HepG2 (cell line): ENCODE measurements at regions of chr5 and their contacts with region 1.

Region 1: DNA sequence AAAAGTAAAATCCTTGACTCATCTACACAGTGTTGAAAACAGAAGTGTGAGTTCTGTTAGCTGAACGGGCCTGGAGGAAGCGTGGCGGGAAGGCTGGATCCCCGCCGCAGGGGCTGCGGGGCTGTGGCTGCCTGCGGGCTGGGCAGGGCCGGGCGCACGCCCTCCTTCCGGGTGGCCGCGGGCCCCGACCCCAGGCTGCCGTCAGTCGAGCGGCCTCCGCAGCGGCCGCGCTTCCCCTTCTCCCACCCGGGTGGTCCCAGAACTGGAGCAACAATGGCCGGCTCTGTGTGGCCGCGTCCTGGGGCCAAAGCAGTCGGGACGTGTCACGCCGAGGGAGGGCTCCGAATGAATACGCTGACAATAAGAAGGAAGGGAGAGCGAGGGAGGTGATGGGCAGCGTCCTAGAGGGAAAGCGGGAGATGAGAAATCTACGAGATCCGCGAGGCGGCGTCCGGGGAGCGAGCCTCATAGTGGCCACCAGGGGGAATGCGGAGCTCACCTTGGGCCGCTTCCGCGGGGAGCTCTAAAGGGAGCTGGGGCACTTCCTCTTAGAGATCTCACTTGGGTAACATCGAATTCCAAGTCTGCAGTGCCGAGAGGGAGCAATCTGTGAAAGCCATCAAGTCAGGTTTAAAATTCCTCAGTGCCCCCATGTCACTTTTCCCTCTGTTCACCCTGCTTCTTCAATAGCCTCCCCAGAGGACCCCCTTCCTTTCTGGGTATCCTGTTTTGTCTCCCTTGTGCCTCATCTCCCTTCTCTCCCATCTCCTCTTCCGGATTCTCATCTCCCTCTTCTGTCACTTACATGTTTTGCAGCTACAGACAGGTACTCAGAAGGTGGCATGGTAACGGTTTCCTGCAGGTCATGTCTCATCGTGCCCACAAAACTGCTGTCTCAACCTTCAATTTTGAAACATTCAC is 83.9 kb downstream of the SLC1A3 start:
- DNase-seq: peak; percentile 53
- ATAC-seq: peak; percentile 96
- H3K4me3 ChIP-seq: peak overlapping the region; percentile 49 to 71 (median 51)
- H3K27ac ChIP-seq: no peak overlapping the region
- H3K4me1 ChIP-seq: peaks cover 4% of the 10 kb centered on the region; the same call in 1 of the 2 replicates
- H3K27me3 ChIP-seq: peaks cover 0 to 6% of the 10 kb centered on the region in 2 experiments; a peak in 1 of 5 replicates
- CTCF ChIP-seq: peak; percentile 84
- EP300 ChIP-seq: no peak
- POLR2A ChIP-seq: no peak
- RAD21 ChIP-seq: no peak; the same call in 1 of the 2 replicates

Region 2: GRCh38 chr5:36073595-36074216 is 616.6 kb before region 1 on chr5:
- CTCF ChIA-PET with region 1: no interaction called
- POLR2A ChIA-PET with region 1: no interaction called
- in situ Hi-C with region 1: loop called (anchors 25 kb)
- intact Hi-C with region 1: loop called (anchors 10 kb)
- DNase-seq: peak; percentile 38
- ATAC-seq: peak; percentile 97
- H3K4me3 ChIP-seq: no peak overlapping the region
- H3K27ac ChIP-seq: no peak overlapping the region
- H3K4me1 ChIP-seq: 0 out of 2 replicates have a peak, but pooled peaks cover 6% of the 10 kb centered on the region
- H3K27me3 ChIP-seq: no peaks in the 10 kb centered on the region
- CTCF ChIP-seq: peak; percentile 68
- EP300 ChIP-seq: no peak
- POLR2A ChIP-seq: no peak
- RAD21 ChIP-seq: no peak

Region 3: GRCh38 chr5:36177715-36178523 is 512.4 kb before region 1 on chr5:
- CTCF ChIA-PET with region 1: interaction called, 4 read pairs
- POLR2A ChIA-PET with region 1: no interaction called
- in situ Hi-C with region 1: no loop called
- intact Hi-C with region 1: loop called (anchors 2 kb)
- DNase-seq: peak; percentile 48
- ATAC-seq: peak; percentile 45; the same call in 2 of the 3 replicates
- H3K4me3 ChIP-seq: no peak overlapping the region
- H3K27ac ChIP-seq: peak overlapping the region; percentile 23
- H3K4me1 ChIP-seq: peaks cover 60% of the 10 kb centered on the region
- H3K27me3 ChIP-seq: no peaks in the 10 kb centered on the region
- CTCF ChIP-seq: peak; percentile 71
- EP300 ChIP-seq: no peak
- POLR2A ChIP-seq: no peak
- RAD21 ChIP-seq: 0 out of 2 replicates have a peak, but pooled peaks have one; percentile 35

Region 4: DNA sequence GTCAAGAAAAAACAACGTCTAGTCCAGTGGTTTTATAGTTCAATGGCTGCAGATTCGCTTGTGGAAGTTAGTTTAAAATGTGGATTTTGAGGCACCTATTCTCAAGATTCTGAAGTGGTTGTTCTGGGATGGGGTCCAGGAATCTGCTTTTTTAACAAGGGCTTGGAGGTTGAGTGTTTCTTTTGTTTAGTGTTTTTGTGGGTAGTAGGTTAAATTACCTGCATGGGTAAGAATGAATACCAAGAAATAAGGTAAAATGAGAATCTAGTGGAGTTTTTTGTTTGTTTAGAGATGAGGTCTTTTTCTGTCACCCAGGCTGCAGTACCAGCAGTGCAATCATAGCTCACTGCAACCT is 420.1 kb before region 1 on chr5:
- CTCF ChIA-PET with region 1: interaction called, 6 read pairs
- POLR2A ChIA-PET with region 1: no interaction called
- in situ Hi-C with region 1: loop called (anchors 25 kb)
- intact Hi-C with region 1: loop called (anchors 2 kb)
- DNase-seq: no peak
- ATAC-seq: no peak
- H3K4me3 ChIP-seq: no peak overlapping the region
- H3K27ac ChIP-seq: no peak overlapping the region
- H3K4me1 ChIP-seq: no peaks in the 10 kb centered on the region
- H3K27me3 ChIP-seq: no peaks in the 10 kb centered on the region; a peak in 1 of 5 replicates
- CTCF ChIP-seq: no peak
- EP300 ChIP-seq: no peak
- POLR2A ChIP-seq: no peak
- RAD21 ChIP-seq: no peak

Region 5: DNA sequence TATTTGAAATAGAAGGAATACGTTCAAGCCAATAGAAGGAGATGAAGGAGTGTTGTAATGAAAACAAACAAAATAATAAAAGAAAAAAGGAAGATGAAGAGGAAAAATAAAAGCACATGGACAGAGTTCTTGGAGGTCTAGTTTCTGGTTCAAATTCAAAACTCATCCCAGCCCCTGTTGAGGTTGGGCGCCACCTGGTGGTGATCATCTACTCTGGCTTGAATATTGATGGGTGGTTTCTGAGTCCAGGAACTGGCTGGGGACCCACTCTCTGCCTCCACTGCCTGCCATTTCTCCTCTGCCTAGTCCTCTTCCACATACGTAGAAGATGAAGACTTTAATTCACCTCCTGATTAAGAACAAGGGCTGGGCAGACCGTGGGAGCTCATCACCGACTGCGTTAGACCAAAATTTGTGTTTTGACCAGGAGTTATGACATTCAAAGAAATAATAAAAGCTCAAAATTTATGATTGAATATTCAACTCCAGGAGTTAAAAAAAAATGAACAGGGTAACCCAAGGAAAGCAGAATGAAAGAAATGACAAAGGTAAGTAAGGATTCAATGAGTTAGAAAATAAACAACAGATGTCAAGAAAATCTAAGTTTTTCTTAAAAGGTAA is 182.9 kb before region 1 on chr5:
- CTCF ChIA-PET with region 1: no interaction called
- POLR2A ChIA-PET with region 1: no interaction called
- in situ Hi-C with region 1: no loop called
- intact Hi-C with region 1: loop called (anchors 2 kb)
- DNase-seq: peak; percentile 59
- ATAC-seq: peak; percentile 79
- H3K4me3 ChIP-seq: no peak overlapping the region
- H3K27ac ChIP-seq: no peak overlapping the region
- H3K4me1 ChIP-seq: peaks cover 1% of the 10 kb centered on the region; the same call in 1 of the 2 replicates
- H3K27me3 ChIP-seq: no peaks in the 10 kb centered on the region
- CTCF ChIP-seq: peak; percentile 81
- EP300 ChIP-seq: no peak
- POLR2A ChIP-seq: no peak
- RAD21 ChIP-seq: peak; percentile 74

Region 6: DNA sequence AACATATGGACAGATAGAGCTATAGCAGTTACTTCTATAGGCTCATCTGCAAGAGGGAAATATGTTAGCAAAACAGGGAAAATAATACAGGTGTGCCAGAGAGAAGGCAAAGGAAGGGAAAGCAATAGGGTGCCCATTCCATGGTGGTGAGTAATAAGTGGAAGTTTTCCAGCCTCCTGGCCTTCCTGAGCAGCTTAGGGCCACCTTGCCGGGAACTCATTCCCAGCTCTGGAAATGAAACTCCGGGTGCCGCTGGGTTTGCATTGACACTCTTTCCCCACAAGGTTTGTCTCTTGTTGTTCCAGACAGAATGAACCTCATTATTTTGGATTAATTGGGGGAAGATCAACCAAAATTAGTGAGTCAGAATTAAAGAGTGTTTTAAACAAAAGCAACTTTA is 25.5 kb before region 1 on chr5:
- CTCF ChIA-PET with region 1: no interaction called
- POLR2A ChIA-PET with region 1: no interaction called
- in situ Hi-C with region 1: no loop called
- intact Hi-C with region 1: no loop called
- DNase-seq: no peak
- ATAC-seq: no peak
- H3K4me3 ChIP-seq: no peak overlapping the region
- H3K27ac ChIP-seq: no peak overlapping the region
- H3K4me1 ChIP-seq: no peaks in the 10 kb centered on the region
- H3K27me3 ChIP-seq: no peaks in the 10 kb centered on the region
- CTCF ChIP-seq: no peak
- EP300 ChIP-seq: no peak
- POLR2A ChIP-seq: no peak
- RAD21 ChIP-seq: no peak